CD4-positive, alpha-beta T cell (primary cell): ENCODE measurements at regions of chr11 and their contacts with region 1.

Region 1: DNA sequence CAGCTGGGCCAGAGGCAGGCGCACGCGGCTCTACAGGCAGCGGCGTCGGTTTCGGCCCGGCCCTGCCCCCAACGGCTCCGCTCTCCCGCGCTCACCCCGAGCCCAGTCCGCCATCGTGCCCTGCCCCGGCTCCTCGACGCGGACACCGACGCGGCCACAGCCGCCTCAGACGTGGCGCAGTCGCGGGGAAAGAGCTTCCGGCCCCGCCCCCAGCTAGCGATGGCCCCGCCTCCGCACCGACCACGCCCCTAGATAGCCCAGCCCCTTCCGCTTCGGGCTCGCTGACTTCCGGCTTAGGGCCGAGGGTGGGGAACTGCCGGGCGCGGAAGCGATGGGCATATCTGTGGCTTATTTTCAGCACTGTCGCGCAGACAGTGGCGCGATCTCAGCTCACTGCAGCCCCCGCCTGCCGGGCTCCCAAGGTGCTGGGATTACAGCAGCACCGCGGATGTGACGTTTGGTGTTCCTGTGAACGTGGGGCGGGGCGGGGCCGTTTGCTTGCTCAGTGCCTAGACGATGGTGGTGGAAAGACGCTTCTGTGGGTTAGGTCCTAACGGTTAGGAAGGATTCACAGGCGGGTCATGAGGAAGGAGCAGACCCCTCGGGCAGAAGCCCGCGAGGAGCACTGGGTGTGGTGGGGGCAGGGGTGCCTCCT is at the starts of genes BET1L and RIC8A:
- DNase-seq: peak; percentile 94 to 100 (median 97)
- ATAC-seq: peak; percentile 76
- H3K4me3 ChIP-seq: peak within 1 kb of the TSS; percentile 69
- H3K4me3 Mint-ChIP-seq: peak within 1 kb of the TSS; percentile 95
- H3K27ac ChIP-seq: peak within 1 kb of the TSS; percentile 93 to 94
- H3K27ac Mint-ChIP-seq: peak within 1 kb of the TSS; percentile 99
- H3K4me1 ChIP-seq: peaks cover 78% of the 10 kb centered on the region
- H3K4me1 Mint-ChIP-seq: peaks cover 61% of the 10 kb centered on the region
- H3K27me3 ChIP-seq: no peaks in the 10 kb centered on the region
- H3K27me3 Mint-ChIP-seq: no peaks in the 10 kb centered on the region
- CTCF ChIP-seq: no peak
- total RNA-seq, gene BET1L: 69.5 to 72.7 TPM
- total RNA-seq, gene RIC8A: 99.6 to 104 TPM

Region 2: DNA sequence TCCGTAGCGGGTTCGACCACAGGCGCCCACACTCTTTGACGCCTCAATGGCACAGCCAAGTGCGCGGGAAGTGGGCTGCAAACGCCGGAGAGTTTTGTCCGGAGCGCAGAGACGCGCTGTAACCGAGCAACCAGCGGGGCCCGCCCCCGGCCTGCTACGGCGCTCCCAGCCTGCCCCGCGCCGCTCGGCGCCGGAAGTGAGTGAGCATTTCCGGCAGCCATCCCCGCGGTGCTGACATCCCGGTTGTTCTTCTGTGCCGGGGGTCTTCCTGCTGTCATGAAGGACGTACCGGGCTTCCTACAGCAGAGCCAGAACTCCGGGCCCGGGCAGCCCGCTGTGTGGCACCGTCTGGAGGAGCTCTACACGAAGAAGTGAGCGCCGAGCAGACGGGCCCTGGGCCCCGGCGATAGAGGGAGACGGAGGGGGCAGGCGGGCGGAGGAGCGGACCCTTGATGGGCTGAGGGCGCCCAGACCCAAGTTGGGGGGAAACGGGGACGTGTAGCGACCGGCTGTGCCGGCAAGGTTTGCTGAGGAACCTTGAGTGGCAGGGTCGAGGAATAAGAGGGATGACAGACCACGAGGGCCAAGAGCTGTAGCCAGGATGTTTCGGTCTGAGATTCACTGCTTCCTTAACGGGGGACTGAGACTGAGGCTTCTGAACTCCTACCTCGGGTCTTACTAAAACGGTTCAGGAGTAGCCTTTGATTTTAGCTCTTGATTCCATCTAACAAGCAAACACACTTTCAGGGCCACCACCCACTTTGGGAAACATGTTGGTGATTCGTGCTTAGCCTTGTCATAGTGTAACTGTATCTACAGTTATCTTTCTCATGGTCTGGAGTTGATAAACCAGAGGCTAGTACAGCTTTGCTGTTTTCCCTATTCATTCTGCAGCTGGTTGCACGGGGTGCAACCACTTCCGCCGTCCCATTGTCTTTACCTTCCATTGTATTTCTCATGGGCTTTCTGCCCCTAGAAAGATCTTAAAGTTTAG is 29.7 kb after region 1 on chr11 and contains the start of gene PSMD13:
- CTCF ChIA-PET with region 1: no interaction called
- POLR2A ChIA-PET with region 1: interaction called, 79 read pairs
- intact Hi-C with region 1: loop called (anchors 1 kb)
- DNase-seq: peak; percentile 76 to 94 (median 84)
- ATAC-seq: peak; percentile 79
- H3K4me3 ChIP-seq: peak within 1 kb of the TSS; percentile 91
- H3K4me3 Mint-ChIP-seq: peak within 1 kb of the TSS; percentile 100
- H3K27ac ChIP-seq: peak within 1 kb of the TSS; percentile 97 to 100
- H3K27ac Mint-ChIP-seq: peak within 1 kb of the TSS; percentile 91
- H3K4me1 ChIP-seq: peaks cover 27% of the 10 kb centered on the region
- H3K4me1 Mint-ChIP-seq: peaks cover 55% of the 10 kb centered on the region
- H3K27me3 ChIP-seq: no peaks in the 10 kb centered on the region
- H3K27me3 Mint-ChIP-seq: no peaks in the 10 kb centered on the region
- CTCF ChIP-seq: peak; percentile 31
- total RNA-seq, gene PSMD13: 56.9 to 57.8 TPM

Region 3: DNA sequence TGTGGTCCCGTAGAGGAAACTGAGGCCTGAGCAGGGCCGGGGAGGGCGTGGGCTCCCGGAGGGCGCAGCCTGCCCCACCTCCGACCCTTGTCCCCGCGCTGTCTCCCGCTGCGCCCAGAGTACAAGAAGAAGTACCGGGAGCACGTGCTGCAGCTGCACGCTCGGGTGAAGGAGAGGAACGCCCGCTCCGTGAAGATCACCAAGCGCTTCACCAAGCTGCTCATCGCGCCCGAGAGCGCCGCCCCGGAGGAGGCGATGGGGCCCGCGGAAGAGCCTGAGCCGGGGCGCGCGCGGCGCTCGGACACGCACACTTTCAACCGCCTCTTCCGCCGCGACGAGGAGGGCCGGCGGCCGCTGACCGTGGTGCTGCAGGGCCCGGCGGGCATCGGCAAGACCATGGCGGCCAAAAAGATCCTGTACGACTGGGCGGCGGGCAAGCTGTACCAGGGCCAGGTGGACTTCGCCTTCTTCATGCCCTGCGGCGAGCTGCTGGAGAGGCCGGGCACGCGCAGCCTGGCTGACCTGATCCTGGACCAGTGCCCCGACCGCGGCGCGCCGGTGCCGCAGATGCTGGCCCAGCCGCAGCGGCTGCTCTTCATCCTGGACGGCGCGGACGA is 72.7 kb after region 1 on chr11:
- CTCF ChIA-PET with region 1: no interaction called
- POLR2A ChIA-PET with region 1: interaction called, 35 read pairs
- intact Hi-C with region 1: no loop called
- DNase-seq: peak in 10 of 14 experiments; percentile 37 to 78 (median 51)
- ATAC-seq: peak; percentile 69
- H3K4me3 ChIP-seq: peak overlapping the region; percentile 53
- H3K4me3 Mint-ChIP-seq: peak overlapping the region; percentile 92
- H3K27ac ChIP-seq: no peak overlapping the region
- H3K27ac Mint-ChIP-seq: peak overlapping the region; percentile 81
- H3K4me1 ChIP-seq: peaks cover 56% of the 10 kb centered on the region
- H3K4me1 Mint-ChIP-seq: peaks cover 61% of the 10 kb centered on the region
- H3K27me3 ChIP-seq: peaks cover 10 to 18% of the 10 kb centered on the region in 2 experiments
- H3K27me3 Mint-ChIP-seq: peaks cover 12% of the 10 kb centered on the region
- CTCF ChIP-seq: no peak

Region 4: DNA sequence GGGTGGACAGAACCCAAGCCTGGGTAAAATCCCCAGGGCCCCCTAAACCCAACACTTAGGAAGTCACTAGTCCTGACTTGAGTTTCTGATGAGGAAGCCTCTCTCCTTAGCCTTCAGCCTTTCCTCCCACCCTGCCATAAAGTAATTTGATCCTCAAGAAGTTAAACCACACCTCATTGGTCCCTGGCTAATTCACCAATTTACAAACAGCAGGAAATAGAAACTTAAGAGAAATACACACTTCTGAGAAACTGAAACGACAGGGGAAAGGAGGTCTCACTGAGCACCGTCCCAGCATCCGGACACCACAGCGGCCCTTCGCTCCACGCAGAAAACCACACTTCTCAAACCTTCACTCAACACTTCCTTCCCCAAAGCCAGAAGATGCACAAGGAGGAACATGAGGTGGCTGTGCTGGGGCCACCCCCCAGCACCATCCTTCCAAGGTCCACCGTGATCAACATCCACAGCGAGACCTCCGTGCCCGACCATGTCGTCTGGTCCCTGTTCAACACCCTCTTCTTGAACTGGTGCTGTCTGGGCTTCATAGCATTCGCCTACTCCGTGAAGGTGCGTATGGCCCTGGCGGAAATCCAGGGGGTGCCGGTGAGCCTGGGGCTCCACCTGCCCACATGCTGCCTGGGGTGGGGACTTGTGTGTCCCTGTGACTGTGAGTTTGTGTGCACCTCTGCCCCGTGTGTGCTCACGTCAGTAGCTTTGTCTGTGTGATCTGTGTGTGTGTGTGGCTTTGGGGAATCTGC is 106.6 kb after region 1 on chr11 and contains the start of gene IFITM1:
- CTCF ChIA-PET with region 1: no interaction called
- POLR2A ChIA-PET with region 1: interaction called, 20 read pairs
- intact Hi-C with region 1: loop called in 1 of 2 experiments (anchors 5 kb)
- DNase-seq: peak in 13 of 14 experiments; percentile 40 to 89 (median 70)
- ATAC-seq: peak; percentile 62
- H3K4me3 ChIP-seq: peak within 1 kb of the TSS; percentile 90
- H3K4me3 Mint-ChIP-seq: peak within 1 kb of the TSS; percentile 97
- H3K27ac ChIP-seq: peak within 1 kb of the TSS; percentile 82 to 93
- H3K27ac Mint-ChIP-seq: peak within 1 kb of the TSS; percentile 98
- H3K4me1 ChIP-seq: peaks cover 56% of the 10 kb centered on the region
- H3K4me1 Mint-ChIP-seq: peaks cover 50% of the 10 kb centered on the region
- H3K27me3 ChIP-seq: no peaks in the 10 kb centered on the region
- H3K27me3 Mint-ChIP-seq: no peaks in the 10 kb centered on the region
- CTCF ChIP-seq: no peak
- total RNA-seq, gene IFITM1: 286 to 306 TPM

Region 5: GRCh38 chr11:324156-324555 is 116.8 kb after region 1 on chr11:
- CTCF ChIA-PET with region 1: no interaction called
- POLR2A ChIA-PET with region 1: no interaction called
- intact Hi-C with region 1: no loop called
- DNase-seq: no peak
- ATAC-seq: no peak
- H3K4me3 ChIP-seq: no peak overlapping the region
- H3K4me3 Mint-ChIP-seq: no peak overlapping the region
- H3K27ac ChIP-seq: no peak overlapping the region
- H3K27ac Mint-ChIP-seq: peak overlapping the region; percentile 78
- H3K4me1 ChIP-seq: peaks cover 64% of the 10 kb centered on the region
- H3K4me1 Mint-ChIP-seq: peaks cover 58% of the 10 kb centered on the region
- H3K27me3 ChIP-seq: no peaks in the 10 kb centered on the region
- H3K27me3 Mint-ChIP-seq: no peaks in the 10 kb centered on the region
- CTCF ChIP-seq: no peak

Region 6: GRCh38 chr11:346529-346928 is 139.2 kb after region 1 on chr11:
- CTCF ChIA-PET with region 1: no interaction called
- POLR2A ChIA-PET with region 1: no interaction called
- intact Hi-C with region 1: no loop called
- DNase-seq: no peak
- ATAC-seq: no peak
- H3K4me3 ChIP-seq: no peak overlapping the region
- H3K4me3 Mint-ChIP-seq: no peak overlapping the region
- H3K27ac ChIP-seq: no peak overlapping the region
- H3K27ac Mint-ChIP-seq: no peak overlapping the region
- H3K4me1 ChIP-seq: peaks cover 12% of the 10 kb centered on the region
- H3K4me1 Mint-ChIP-seq: peaks cover 21% of the 10 kb centered on the region
- H3K27me3 ChIP-seq: no peaks in the 10 kb centered on the region
- H3K27me3 Mint-ChIP-seq: no peaks in the 10 kb centered on the region
- CTCF ChIP-seq: no peak

Region 7: DNA sequence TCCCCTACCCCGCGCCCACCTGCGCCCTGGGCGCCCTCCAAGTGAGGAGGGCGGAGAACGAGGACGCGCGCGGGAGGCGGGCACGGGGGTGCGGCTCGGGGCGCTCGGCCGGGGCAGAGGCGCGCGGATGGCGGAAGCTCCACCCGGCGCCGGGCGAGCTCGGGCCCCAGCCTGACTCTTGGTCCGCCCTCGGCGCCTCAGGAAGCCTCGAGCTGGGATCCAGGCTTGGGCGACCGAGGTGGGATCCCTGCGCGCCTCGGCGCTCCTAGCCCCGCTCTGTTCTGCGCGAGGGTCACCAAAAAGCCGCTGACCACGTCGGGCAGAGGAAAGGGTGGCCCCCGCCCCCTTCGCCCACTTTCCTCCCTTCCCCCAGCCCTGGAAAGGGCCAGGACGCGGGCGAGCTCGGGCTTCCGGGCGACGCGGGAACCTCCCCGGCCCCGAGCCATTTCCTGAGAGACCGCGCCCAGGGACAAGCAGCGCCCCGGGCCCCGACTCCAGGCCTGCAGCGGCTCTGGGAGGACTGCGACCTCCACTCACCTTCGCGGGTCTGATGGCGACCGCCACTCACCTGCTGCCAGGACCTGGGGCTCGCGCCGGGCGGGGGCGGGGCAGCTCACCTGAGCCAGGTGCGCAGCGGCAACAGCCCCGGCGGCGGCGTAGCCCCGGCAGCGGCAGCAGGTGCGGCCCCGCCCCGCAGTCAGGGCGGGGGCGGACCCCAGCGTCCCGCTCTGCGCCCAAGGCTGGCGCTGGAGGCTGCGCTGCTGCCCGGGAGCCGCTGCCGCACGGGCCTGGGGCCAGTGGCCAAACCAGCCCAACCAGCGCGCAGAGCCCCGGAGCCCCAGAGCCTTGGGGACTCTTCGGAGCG is 209.7 kb after region 1 on chr11:
- CTCF ChIA-PET with region 1: no interaction called
- POLR2A ChIA-PET with region 1: interaction called, 19 read pairs
- intact Hi-C with region 1: no loop called
- DNase-seq: peak in 10 of 14 experiments; percentile 19 to 71 (median 48)
- ATAC-seq: peak; percentile 13
- H3K4me3 ChIP-seq: peak overlapping the region; percentile 96
- H3K4me3 Mint-ChIP-seq: peak overlapping the region; percentile 90
- H3K27ac ChIP-seq: peak overlapping the region; percentile 48 to 75
- H3K27ac Mint-ChIP-seq: peak overlapping the region; percentile 78
- H3K4me1 ChIP-seq: peaks cover 48% of the 10 kb centered on the region
- H3K4me1 Mint-ChIP-seq: peaks cover 34% of the 10 kb centered on the region
- H3K27me3 ChIP-seq: no peaks in the 10 kb centered on the region
- H3K27me3 Mint-ChIP-seq: no peaks in the 10 kb centered on the region
- CTCF ChIP-seq: no peak

Region 8: GRCh38 chr11:535519-536454 is 328.5 kb after region 1 on chr11 and contains the start of gene HRAS:
- CTCF ChIA-PET with region 1: no interaction called
- POLR2A ChIA-PET with region 1: interaction called, 13 read pairs
- intact Hi-C with region 1: no loop called
- DNase-seq: peak; percentile 89 to 99 (median 96)
- ATAC-seq: peak; percentile 90
- H3K4me3 ChIP-seq: peak within 1 kb of the TSS; percentile 71
- H3K4me3 Mint-ChIP-seq: peak within 1 kb of the TSS; percentile 98
- H3K27ac ChIP-seq: peak within 1 kb of the TSS; percentile 73 to 79
- H3K27ac Mint-ChIP-seq: peak within 1 kb of the TSS; percentile 93
- H3K4me1 ChIP-seq: peaks cover 44% of the 10 kb centered on the region
- H3K4me1 Mint-ChIP-seq: peaks cover 16% of the 10 kb centered on the region
- H3K27me3 ChIP-seq: no peaks in the 10 kb centered on the region
- H3K27me3 Mint-ChIP-seq: no peaks in the 10 kb centered on the region
- CTCF ChIP-seq: no peak
- total RNA-seq, gene HRAS: 23.7 to 23.9 TPM

Region 9: DNA sequence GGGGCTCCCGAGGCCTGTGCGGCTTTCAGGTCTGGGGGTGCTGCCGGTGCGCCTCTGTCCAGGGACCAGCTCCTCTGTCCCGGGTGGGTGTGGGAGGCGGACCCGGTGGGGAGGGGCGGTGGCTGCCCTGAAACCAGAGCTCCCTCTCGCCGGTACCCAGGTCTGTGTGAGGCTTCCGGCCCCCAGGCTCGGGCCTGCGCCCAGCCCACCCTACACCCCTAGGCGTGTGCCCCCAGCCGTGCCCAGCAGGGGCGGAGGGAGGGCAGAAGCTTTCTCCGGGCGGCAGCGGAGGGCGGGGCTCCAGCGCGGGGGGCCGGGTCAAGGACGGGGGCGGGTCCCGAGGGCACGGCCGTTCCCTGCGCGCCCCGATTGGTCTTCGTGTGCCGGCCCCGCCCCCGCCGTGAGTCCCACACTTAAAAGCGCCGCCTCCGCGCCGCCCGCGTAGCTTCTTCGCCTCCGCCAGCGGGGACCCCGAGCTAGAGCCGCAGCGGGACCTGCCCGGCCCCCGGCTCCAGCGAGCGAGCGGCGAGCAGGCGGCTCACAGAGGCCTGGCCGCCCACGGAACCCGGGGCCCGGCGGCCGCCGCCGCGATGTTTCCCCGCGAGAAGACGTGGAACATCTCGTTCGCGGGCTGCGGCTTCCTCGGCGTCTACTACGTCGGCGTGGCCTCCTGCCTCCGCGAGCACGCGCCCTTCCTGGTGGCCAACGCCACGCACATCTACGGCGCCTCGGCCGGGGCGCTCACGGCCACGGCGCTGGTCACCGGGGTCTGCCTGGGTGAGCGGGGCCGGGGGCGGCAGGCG is 612.0 kb after region 1 on chr11:
- CTCF ChIA-PET with region 1: no interaction called
- POLR2A ChIA-PET with region 1: interaction called, 10 read pairs
- intact Hi-C with region 1: no loop called
- DNase-seq: peak; percentile 83 to 96 (median 92)
- ATAC-seq: peak; percentile 71
- H3K4me3 ChIP-seq: peak overlapping the region; percentile 74
- H3K4me3 Mint-ChIP-seq: peak overlapping the region; percentile 97
- H3K27ac ChIP-seq: peak overlapping the region; percentile 62 to 88
- H3K27ac Mint-ChIP-seq: peak overlapping the region; percentile 92
- H3K4me1 ChIP-seq: peaks cover 34% of the 10 kb centered on the region
- H3K4me1 Mint-ChIP-seq: peaks cover 11% of the 10 kb centered on the region
- H3K27me3 ChIP-seq: no peaks in the 10 kb centered on the region
- H3K27me3 Mint-ChIP-seq: no peaks in the 10 kb centered on the region
- CTCF ChIP-seq: peak; percentile 21